T-cell (primary cell): ENCODE measurements at regions of chr3 and their contacts with region 1.

Region 1: GRCh38 chr3:46242120-46242519 is at the start of gene CCR3:
- DNase-seq: no peak
- ATAC-seq: no peak
- H3K4me3 ChIP-seq: no peak within 1 kb of the TSS
- H3K4me3 Mint-ChIP-seq: no peak within 1 kb of the TSS
- H3K27ac ChIP-seq: no peak within 1 kb of the TSS
- H3K27ac Mint-ChIP-seq: no peak within 1 kb of the TSS
- H3K4me1 ChIP-seq: no peaks in the 10 kb centered on the region
- H3K4me1 Mint-ChIP-seq: peaks cover 4 to 9% (median 5%) of the 10 kb centered on the region in 3 donors
- H3K27me3 ChIP-seq: no peaks in the 10 kb centered on the region
- H3K27me3 Mint-ChIP-seq: peaks cover 0 to 4% of the 10 kb centered on the region in 2 donors
- total RNA-seq, gene CCR3: 0.33 to 1.2 (median 0.55) TPM in 3 of 5 donors, not detected in the others

Region 2: GRCh38 chr3:46261926-46262594 is 19.9 kb after region 1 on chr3:
- CTCF ChIA-PET with region 1: interaction called in 1 of 2 experiments, 3 read pairs
- POLR2A ChIA-PET with region 1: interaction called in 1 of 2 experiments, 10 read pairs
- DNase-seq: peak in 1 of 35 experiments; percentile 30
- ATAC-seq: no peak
- H3K4me3 ChIP-seq: no peak overlapping the region
- H3K4me3 Mint-ChIP-seq: peak overlapping the region; percentile 29 to 55 (median 37)
- H3K27ac ChIP-seq: peak overlapping the region; percentile 6
- H3K27ac Mint-ChIP-seq: peak overlapping the region in 1 of 2 donors; percentile 23
- H3K4me1 ChIP-seq: peaks cover 0 to 14% of the 10 kb centered on the region in 2 experiments
- H3K4me1 Mint-ChIP-seq: peaks cover 0 to 16% (median 8%) of the 10 kb centered on the region in 3 donors
- H3K27me3 ChIP-seq: no peaks in the 10 kb centered on the region
- H3K27me3 Mint-ChIP-seq: no peaks in the 10 kb centered on the region